Activated CD4-positive, alpha-beta T cell treated with anti-CD3 and anti-CD28 coated beads for 36 hours (primary cell): ENCODE measurements at regions of chr17 and their contacts with region 1.

Region 1: GRCh38 chr17:45161019-45161825 is 453 bp upstream of the HEXIM2 start:
- DNase-seq: peak; percentile 97
- ATAC-seq: peak; percentile 97
- H3K4me3 Mint-ChIP-seq: peak overlapping the region; percentile 96
- H3K27ac Mint-ChIP-seq: peak overlapping the region; percentile 96
- H3K4me1 Mint-ChIP-seq: peaks cover 26% of the 10 kb centered on the region
- H3K27me3 Mint-ChIP-seq: no peaks in the 10 kb centered on the region

Region 2: GRCh38 chr17:44899069-44899782 is 262.0 kb before region 1 on chr17 and contains the start of gene EFTUD2:
- CTCF ChIA-PET with region 1: no interaction called
- POLR2A ChIA-PET with region 1: no interaction called
- intact Hi-C with region 1: loop called in 1 of 2 experiments (anchors 1 kb)
- DNase-seq: peak; percentile 95
- ATAC-seq: peak; percentile 94
- H3K4me3 Mint-ChIP-seq: peak within 1 kb of the TSS; percentile 98
- H3K27ac Mint-ChIP-seq: peak within 1 kb of the TSS; percentile 98
- H3K4me1 Mint-ChIP-seq: peaks cover 26% of the 10 kb centered on the region
- H3K27me3 Mint-ChIP-seq: no peaks in the 10 kb centered on the region
- total RNA-seq, gene EFTUD2: 175 to 203 TPM

Region 3: DNA sequence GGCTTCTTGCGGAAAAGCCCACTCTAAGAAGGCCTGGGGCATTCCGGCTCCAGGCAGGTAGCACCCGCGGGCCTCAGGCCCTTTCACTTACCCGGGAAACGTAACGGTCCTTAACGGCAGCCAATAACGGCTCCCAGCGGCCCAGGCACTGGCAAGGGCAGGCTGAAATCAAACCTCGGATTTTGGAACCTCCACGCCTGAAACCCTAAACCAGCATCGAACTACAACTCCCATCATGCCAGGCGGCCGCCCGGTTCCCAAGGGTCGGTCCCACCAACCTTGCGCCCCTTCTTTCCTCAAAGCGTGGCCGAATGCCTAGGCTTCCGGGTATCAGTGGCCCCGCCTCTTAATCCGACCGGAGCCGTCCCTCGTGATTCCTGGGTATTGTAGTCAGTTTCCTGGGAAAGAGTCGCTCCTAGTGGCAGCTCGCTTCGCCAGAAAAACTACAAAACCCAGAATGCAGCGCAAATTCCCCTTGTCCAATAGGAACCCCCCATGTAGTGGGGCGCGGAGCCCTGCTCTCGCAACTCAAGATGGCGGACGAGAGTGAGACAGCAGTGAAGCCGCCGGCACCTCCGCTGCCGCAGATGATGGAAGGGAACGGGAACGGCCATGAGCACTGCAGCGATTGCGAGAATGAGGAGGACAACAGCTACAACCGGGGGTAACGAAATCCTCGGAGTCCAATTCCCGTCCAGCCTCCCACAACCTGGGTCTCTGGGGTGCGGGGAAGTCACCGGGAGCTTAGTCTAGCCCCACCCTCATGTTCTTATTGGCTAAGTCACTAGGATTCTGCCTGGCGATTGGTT is 100.2 kb before region 1 on chr17 and contains the start of gene NMT1:
- CTCF ChIA-PET with region 1: no interaction called
- POLR2A ChIA-PET with region 1: interaction called, 7 read pairs
- intact Hi-C with region 1: loop called (anchors 1 kb)
- DNase-seq: peak; percentile 97
- ATAC-seq: peak; percentile 92
- H3K4me3 Mint-ChIP-seq: peak within 1 kb of the TSS; percentile 84
- H3K27ac Mint-ChIP-seq: peak within 1 kb of the TSS; percentile 96
- H3K4me1 Mint-ChIP-seq: peaks cover 42% of the 10 kb centered on the region
- H3K27me3 Mint-ChIP-seq: no peaks in the 10 kb centered on the region
- total RNA-seq, gene NMT1: 170 to 175 TPM

Region 4: GRCh38 chr17:45172454-45173286 is 11.4 kb after region 1 on chr17:
- CTCF ChIA-PET with region 1: interaction called, 13 read pairs
- POLR2A ChIA-PET with region 1: interaction called, 9 read pairs
- intact Hi-C with region 1: loop called (anchors 1 kb)
- DNase-seq: peak; percentile 81
- ATAC-seq: peak; percentile 88
- H3K4me3 Mint-ChIP-seq: peak overlapping the region; percentile 69
- H3K27ac Mint-ChIP-seq: peak overlapping the region; percentile 85
- H3K4me1 Mint-ChIP-seq: peaks cover 23% of the 10 kb centered on the region
- H3K27me3 Mint-ChIP-seq: no peaks in the 10 kb centered on the region

Region 5: DNA sequence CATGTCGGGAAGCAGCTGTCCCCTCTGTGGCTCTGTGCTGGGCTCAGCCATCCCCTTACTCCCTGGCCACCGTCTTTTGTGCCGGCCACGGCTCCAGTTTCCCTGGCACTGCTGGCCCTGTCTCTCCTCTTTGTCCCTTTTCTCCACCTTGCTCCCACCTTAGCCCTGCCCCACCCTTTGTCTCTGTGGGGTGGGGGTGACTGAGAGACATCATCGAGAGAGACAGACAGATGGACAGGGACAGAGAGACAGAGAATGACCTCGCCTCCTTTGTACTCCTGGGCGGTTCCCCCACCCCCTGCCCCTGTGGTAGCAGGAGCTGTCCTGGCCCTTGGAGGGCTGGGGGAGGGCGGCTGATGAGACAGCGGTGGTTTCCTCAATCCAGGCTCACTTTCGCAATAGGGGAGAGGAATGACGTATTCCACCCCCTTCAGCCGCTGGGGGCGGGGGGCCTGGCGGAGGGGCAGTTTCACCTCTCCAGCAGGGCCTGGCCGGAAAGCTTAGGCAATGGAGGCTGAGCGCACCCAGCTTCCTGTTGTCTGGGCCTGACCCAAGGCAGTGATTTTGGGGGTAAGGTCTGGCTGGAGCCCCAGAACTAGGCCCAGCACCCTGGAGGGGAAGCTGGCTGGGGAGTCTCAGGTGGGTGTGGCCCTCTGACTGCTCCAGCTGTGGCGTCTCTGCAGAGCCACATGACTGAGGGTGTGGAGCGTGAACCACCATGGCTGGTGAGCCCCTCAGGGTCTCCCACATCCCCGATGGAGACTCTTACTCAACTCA is 67.7 kb after region 1 on chr17:
- CTCF ChIA-PET with region 1: interaction called, 4 read pairs
- POLR2A ChIA-PET with region 1: interaction called, 6 read pairs
- intact Hi-C with region 1: loop called in 1 of 2 experiments (anchors 1 kb)
- DNase-seq: peak; percentile 93
- ATAC-seq: peak; percentile 37
- H3K4me3 Mint-ChIP-seq: peak overlapping the region; percentile 94
- H3K27ac Mint-ChIP-seq: peak overlapping the region; percentile 100
- H3K4me1 Mint-ChIP-seq: peaks cover 82% of the 10 kb centered on the region
- H3K27me3 Mint-ChIP-seq: no peaks in the 10 kb centered on the region

Region 6: DNA sequence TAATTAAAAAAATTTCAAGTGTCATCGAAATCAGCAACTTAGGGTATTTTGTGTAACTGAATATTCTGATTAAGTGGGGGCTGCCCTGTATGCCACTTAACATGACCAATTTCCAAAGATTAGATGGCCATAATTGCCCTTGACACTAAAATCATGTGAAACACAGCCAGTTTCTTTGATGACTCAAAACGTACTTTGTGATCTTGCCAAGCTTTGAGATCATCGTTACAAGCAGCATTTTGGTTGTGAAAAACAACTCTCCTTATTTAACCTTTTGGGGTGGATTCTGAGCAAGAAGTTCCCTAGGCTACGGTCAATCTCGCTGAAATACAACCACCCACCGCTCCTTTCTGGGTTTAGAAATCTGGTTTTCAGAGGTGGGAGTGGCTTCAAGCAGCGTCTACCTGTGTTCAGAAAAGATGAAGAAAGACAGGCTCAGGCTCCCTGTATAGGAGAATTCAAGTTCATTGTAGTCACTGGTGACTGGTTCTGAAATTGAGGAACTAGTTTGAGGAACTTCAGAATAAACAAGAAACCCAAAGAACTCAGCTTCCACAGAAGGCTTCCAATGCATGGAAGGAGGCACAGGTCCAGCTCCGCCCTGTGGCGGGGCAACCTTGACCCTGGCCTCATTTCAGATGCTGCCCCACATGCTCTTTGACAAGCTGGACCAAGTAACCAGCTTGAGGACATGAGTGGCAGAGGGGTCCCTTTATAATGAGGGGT is 146.2 kb after region 1 on chr17:
- CTCF ChIA-PET with region 1: no interaction called
- POLR2A ChIA-PET with region 1: interaction called, 10 read pairs
- intact Hi-C with region 1: no loop called
- DNase-seq: peak; percentile 78
- ATAC-seq: peak; percentile 56
- H3K4me3 Mint-ChIP-seq: peak overlapping the region; percentile 44
- H3K27ac Mint-ChIP-seq: peak overlapping the region; percentile 97
- H3K4me1 Mint-ChIP-seq: peaks cover 89% of the 10 kb centered on the region
- H3K27me3 Mint-ChIP-seq: no peaks in the 10 kb centered on the region

Region 7: GRCh38 chr17:46193626-46194392 is 1032.6 kb after region 1 on chr17:
- CTCF ChIA-PET with region 1: no interaction called
- POLR2A ChIA-PET with region 1: no interaction called
- intact Hi-C with region 1: loop called in 1 of 2 experiments (anchors 5 kb)
- DNase-seq: peak; percentile 96
- ATAC-seq: peak; percentile 83
- H3K4me3 Mint-ChIP-seq: peak overlapping the region; percentile 74
- H3K27ac Mint-ChIP-seq: peak overlapping the region; percentile 94
- H3K4me1 Mint-ChIP-seq: peaks cover 56% of the 10 kb centered on the region
- H3K27me3 Mint-ChIP-seq: no peaks in the 10 kb centered on the region